ENCODE measurements at regions of chr10 and their contacts with region 1.

Region 1: GRCh38 chr10:95246579-95247051 is 44.2 kb downstream of the PDLIM1 start:
- H3K4me3 Mint-ChIP-seq: no peak overlapping the region
- H3K27ac Mint-ChIP-seq: no peak overlapping the region
- H3K4me1 Mint-ChIP-seq: peaks cover 5% of the 10 kb centered on the region
- H3K27me3 Mint-ChIP-seq: peaks cover 2% of the 10 kb centered on the region

Region 2: GRCh38 chr10:94623572-94623971 is 623.0 kb before region 1 on chr10:
- intact Hi-C with region 1: loop called (anchors 10 kb)
- H3K4me3 Mint-ChIP-seq: no peak overlapping the region
- H3K27ac Mint-ChIP-seq: no peak overlapping the region
- H3K4me1 Mint-ChIP-seq: no peaks in the 10 kb centered on the region
- H3K27me3 Mint-ChIP-seq: no peaks in the 10 kb centered on the region

Region 3: DNA sequence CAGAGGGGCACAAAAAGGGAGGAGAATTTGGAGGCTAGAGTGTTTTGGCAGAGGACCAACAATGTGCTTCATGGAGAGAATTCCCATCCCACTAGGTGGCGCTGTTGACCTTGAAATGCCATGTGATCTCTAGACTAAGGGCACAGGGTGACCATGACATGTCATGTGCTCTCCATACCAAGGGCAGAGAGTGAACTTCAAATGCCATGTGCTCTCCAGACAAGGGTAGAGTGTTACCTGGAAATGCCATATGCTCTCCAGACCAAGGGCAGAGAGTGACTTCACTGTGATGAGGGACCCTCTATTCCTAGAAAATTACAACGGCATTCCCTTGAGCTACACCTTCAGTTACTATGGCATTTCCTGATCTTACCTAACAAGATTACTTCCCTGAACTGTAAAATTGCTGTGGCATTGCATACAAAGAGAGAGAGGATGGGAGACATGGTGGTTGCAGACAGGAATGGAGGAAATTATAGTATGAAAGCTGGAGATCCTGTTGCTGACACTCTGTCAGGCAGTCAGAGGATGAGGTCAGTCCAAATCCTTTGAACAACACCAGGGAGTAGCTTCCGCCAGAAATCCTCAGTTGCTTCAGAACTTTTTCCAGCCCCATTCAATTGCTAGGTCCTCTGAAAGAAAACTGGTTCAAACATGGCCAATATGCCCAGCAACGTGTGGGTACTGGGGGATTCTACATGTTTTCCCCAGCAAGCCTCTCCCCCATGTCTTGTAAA is 113.4 kb before region 1 on chr10:
- intact Hi-C with region 1: loop called (anchors 2 kb)
- H3K4me3 Mint-ChIP-seq: no peak overlapping the region
- H3K27ac Mint-ChIP-seq: no peak overlapping the region
- H3K4me1 Mint-ChIP-seq: no peaks in the 10 kb centered on the region
- H3K27me3 Mint-ChIP-seq: no peaks in the 10 kb centered on the region

Region 4: DNA sequence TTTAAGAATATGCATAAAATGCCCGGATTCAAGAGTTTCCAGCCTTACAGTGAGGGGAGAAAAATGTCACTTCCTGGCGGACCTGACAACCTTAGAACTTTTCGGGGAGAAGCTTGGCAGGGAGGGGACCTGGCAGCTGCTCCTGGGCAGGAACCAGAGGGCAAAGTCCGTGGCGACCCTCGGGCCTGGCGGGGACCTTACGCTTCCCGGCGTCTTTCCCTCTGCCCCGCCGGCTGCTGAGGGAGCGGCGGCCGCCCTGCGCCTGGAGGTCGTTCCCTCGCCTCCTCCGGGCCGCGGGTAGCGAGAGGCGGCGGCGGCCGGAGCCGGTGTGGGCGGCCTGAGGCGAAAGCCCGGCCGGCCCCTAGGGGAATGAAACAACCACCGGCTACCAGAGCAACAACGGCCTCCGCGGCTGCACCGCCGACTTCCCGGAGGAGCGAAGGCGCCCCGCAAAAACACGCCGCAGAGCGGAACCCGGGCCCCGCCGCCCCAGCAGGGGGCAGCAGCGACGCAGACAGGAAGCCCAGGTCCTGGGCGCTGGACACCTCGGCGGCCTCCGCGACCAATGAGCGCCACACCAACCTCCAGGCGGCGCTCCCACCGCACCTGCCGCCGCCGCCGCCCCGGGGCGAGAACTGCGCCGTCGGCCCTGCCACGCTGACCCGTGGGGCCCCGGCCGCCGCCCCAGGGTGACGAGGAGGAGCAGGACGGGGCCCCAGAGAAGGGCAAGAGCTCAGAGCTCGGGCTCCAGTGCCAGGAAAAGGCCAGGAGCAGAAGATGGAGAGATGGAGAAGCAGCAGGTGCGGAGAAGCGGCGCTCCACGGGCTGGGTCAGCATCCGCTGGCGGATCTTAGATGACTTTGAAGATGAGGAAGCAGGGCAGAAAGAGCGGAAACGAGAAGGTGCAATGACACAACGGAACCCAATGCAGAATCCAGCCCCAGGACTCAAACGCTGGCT is 63.1 kb before region 1 on chr10:
- intact Hi-C with region 1: loop called (anchors 1 kb)
- H3K4me3 Mint-ChIP-seq: peak overlapping the region; percentile 55
- H3K27ac Mint-ChIP-seq: peak overlapping the region; percentile 31
- H3K4me1 Mint-ChIP-seq: peaks cover 5% of the 10 kb centered on the region
- H3K27me3 Mint-ChIP-seq: peaks cover 19% of the 10 kb centered on the region

Region 5: DNA sequence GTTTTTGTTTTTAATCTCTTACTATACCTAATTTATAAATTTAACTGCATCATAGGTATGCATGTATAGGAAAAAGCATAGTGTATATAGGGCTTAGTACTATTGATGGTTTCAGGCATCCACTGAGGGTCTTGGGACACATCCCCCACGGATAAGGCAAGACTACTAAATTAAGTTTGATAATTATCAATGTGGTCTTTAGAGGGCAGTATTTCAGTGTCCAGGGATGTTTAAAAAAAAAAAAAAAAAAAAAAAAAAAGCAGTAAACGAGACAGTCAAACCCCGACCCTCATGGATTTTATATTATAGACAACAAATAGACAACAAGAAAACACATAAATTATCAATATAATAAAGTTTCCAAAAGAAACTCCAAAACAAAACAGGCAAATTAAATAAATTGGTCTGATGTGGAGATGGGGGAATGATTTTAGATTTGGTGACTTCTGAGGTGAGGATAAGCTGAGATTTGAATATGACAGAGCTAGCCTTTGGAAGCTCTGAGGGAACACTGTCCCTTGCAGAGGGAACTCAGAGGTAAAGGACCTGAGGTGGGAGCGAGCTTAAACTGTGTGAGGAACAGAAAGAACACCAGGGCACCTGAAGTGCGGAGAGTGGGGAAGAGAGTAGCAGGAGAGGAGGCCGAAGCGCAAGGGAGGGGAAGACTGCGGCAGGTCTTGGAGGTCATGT is 37.8 kb before region 1 on chr10:
- intact Hi-C with region 1: loop called (anchors 5 kb)
- H3K4me3 Mint-ChIP-seq: no peak overlapping the region
- H3K27ac Mint-ChIP-seq: no peak overlapping the region
- H3K4me1 Mint-ChIP-seq: no peaks in the 10 kb centered on the region
- H3K27me3 Mint-ChIP-seq: no peaks in the 10 kb centered on the region

Region 6: DNA sequence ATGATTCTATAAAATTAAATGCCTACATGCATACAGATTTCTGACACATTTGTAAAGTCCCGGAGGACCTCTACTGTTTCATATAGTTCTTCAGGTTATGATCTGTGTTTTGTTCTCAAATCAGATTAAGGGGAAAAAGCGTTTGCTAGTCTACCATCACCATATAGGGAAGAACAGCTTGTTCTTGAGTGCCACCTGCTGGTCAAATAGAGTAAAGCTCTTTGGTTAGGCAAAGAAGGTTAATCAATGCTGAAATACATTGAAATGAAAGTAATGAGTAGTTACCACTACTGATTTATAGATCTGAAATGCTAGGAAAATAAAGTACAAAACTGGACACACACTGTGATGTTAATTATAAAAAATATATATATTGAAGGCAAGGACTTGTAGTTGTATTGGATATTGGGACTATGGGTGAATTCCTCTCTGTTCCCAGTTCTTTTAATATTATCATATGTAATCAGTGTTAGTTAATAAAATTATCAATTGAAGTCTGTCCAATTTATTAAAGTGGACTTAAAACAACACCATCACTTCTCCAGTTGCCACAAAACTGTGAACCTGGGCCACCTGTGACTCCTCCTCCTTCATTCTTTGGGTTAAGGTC is 116.8 kb after region 1 on chr10:
- intact Hi-C with region 1: loop called (anchors 1 kb)
- H3K4me3 Mint-ChIP-seq: no peak overlapping the region
- H3K27ac Mint-ChIP-seq: no peak overlapping the region
- H3K4me1 Mint-ChIP-seq: no peaks in the 10 kb centered on the region
- H3K27me3 Mint-ChIP-seq: peaks cover 6% of the 10 kb centered on the region

Region 7: GRCh38 chr10:95758351-95759025 is 511.9 kb after region 1 on chr10:
- intact Hi-C with region 1: no loop called
- H3K4me3 Mint-ChIP-seq: no peak overlapping the region
- H3K27ac Mint-ChIP-seq: peak overlapping the region; percentile 98
- H3K4me1 Mint-ChIP-seq: peaks cover 62% of the 10 kb centered on the region
- H3K27me3 Mint-ChIP-seq: no peaks in the 10 kb centered on the region

Measured in dendritic cell treated with granulocyte-macrophage colony-stimulating factor and Interleukin-4, amounts not matched to agents 40 ng/mL and 50 ng/mL, for 4 days (primary cell).